WTC11 (cell line): ENCODE measurements at regions of chr10 and their contacts with region 1.

Region 1: DNA sequence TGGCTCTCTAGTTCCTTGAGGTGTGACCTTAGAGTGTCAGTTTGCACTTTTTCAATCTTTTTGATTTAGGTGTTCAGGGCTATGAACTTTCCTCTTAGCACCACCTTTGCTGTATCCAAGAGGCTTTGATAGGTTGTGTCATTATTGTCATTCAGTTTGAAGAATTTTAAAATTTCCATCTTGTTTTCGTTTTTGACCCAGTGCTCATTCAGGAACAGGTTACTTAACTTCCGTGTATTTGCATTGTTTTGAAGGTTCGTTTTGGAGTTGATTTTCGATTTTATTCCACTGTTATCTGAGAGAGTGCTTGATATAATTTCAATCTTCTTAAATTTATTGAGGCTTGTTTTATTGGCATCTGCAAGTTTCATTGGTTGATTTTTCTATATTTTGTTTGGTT is 37.3 kb downstream of the FANK1 start:
- DNase-seq: no peak
- ATAC-seq: no peak
- H3K4me3 Mint-ChIP-seq: no peak overlapping the region
- H3K27ac Mint-ChIP-seq: no peak overlapping the region
- H3K4me1 Mint-ChIP-seq: peaks cover 8% of the 10 kb centered on the region
- H3K27me3 Mint-ChIP-seq: no peaks in the 10 kb centered on the region
- CTCF ChIP-seq: no peak

Region 2: DNA sequence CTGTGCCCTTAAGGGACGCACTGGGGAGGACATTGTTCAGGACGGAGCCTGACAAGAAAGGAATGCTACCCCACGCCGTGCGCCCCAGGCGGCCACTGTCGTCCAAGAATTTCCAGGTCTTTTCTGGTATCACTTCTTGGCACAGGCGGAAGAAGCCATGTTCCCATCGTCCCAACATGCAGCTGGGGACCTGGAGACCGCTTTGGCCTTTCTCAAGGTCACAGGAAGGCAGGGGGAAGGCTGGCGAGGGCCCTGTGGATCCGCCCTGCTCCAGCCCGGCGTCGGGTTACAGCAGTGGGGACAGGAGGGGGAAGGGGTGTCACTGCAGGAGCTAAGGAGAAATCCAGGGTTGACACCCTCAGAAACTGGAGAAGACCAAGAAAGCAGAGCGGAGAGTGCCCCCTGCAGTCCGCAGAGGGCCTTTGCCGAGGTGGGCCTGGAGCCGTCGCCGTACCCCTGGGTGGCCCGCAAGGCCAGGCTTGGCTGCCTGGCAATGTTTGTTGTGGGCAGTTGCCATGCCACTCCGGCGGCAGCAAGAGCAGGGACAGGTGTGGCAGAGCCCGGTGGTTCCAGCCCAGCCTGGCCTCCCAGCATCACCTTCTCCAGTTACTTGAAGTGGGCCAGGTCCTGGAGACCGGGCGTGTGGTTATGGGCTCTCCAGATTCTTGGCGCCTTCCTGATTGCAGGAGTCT is 1368.0 kb before region 1 on chr10:
- CTCF ChIA-PET with region 1: no interaction called
- POLR2A ChIA-PET with region 1: no interaction called
- DNase-seq: peak; percentile 82
- ATAC-seq: peak; percentile 94
- H3K4me3 Mint-ChIP-seq: no peak overlapping the region
- H3K27ac Mint-ChIP-seq: peak overlapping the region; percentile 77
- H3K4me1 Mint-ChIP-seq: peaks cover 15% of the 10 kb centered on the region
- H3K27me3 Mint-ChIP-seq: no peaks in the 10 kb centered on the region
- CTCF ChIP-seq: peak; percentile 63

Region 3: DNA sequence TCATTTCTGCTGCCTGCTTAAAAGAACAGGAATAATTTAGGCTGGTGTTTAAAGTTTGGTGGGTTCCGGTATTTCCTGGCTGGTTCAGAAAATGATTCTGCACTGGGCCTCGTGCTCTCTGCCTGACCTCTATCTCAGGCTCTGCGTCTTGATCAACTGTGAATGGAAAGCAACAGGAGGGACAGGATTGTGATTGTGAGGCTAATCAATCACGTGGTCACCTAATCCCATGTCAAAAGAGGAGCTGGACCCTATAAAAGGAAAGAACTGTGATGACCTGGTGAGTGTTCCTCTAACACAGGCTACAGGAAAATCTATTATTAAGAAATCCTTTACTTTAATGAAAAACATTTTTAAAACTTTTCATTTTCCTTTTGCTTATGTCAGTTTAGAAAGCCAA is 52.5 kb before region 1 on chr10 and contains the start of gene DHX32:
- CTCF ChIA-PET with region 1: interaction called, 13 read pairs
- POLR2A ChIA-PET with region 1: no interaction called
- DNase-seq: peak; percentile 28
- ATAC-seq: peak; percentile 98
- H3K4me3 Mint-ChIP-seq: peak within 1 kb of the TSS; percentile 50
- H3K27ac Mint-ChIP-seq: peak within 1 kb of the TSS; percentile 88
- H3K4me1 Mint-ChIP-seq: peaks cover 27% of the 10 kb centered on the region
- H3K27me3 Mint-ChIP-seq: peaks cover 5% of the 10 kb centered on the region
- CTCF ChIP-seq: no peak
- total RNA-seq, gene DHX32: 22.7 to 28.0 TPM (median 25.6 TPM) in 3 replicates

Region 4: GRCh38 chr10:125961739-125962138 is 28.0 kb after region 1 on chr10:
- CTCF ChIA-PET with region 1: interaction called, 22 read pairs
- POLR2A ChIA-PET with region 1: no interaction called
- DNase-seq: no peak
- ATAC-seq: peak; percentile 63
- H3K4me3 Mint-ChIP-seq: no peak overlapping the region
- H3K27ac Mint-ChIP-seq: no peak overlapping the region
- H3K4me1 Mint-ChIP-seq: peaks cover 7% of the 10 kb centered on the region; the same call in 1 of the 2 replicates
- H3K27me3 Mint-ChIP-seq: no peaks in the 10 kb centered on the region
- CTCF ChIP-seq: no peak

Region 5: DNA sequence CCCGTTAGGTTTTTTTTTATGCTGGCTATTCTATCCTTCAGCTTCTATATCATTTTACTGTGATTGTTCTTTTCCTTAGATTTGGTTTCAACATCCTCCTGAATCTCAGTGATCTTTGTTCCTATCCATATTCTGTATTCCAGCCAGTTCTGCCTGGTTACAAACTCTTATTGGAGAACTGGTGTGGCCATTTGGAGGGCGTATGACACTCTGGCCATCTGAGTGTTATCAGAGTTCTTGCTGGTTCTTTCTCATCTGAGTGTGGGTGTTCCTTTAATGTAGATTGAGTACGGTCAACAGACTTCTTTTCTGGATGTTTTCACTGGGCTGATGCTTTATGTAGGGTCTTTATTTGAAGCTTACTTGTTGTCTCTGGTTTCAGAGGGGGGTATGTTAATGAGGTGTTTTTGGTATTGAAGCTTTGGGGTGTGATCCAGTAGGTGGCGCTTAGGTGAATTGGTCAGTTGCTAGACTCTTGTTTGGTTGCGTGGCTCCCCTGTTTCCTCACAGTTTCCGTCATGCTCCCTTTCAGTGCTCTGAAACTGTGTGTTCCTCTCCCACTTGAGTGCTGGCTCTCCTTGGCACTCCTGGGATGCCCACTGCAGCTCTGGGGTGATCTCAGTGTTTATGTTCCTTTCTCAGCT is 43.4 kb after region 1 on chr10:
- CTCF ChIA-PET with region 1: interaction called, 46 read pairs
- POLR2A ChIA-PET with region 1: no interaction called
- DNase-seq: peak; percentile 35
- ATAC-seq: peak; percentile 80
- H3K4me3 Mint-ChIP-seq: no peak overlapping the region
- H3K27ac Mint-ChIP-seq: no peak overlapping the region
- H3K4me1 Mint-ChIP-seq: peaks cover 16% of the 10 kb centered on the region
- H3K27me3 Mint-ChIP-seq: no peaks in the 10 kb centered on the region
- CTCF ChIP-seq: peak; percentile 10; the same call in 1 of the 2 replicates

Region 6: GRCh38 chr10:125982260-125982948 is 48.7 kb after region 1 on chr10:
- CTCF ChIA-PET with region 1: interaction called, 46 read pairs
- POLR2A ChIA-PET with region 1: no interaction called
- DNase-seq: peak; percentile 33
- ATAC-seq: peak; percentile 76
- H3K4me3 Mint-ChIP-seq: no peak overlapping the region
- H3K27ac Mint-ChIP-seq: no peak overlapping the region
- H3K4me1 Mint-ChIP-seq: peaks cover 20% of the 10 kb centered on the region
- H3K27me3 Mint-ChIP-seq: no peaks in the 10 kb centered on the region
- CTCF ChIP-seq: peak; percentile 48

Region 7: GRCh38 chr10:126504063-126504739 is 570.5 kb after region 1 on chr10:
- CTCF ChIA-PET with region 1: interaction called, 15 read pairs
- POLR2A ChIA-PET with region 1: no interaction called
- DNase-seq: peak; percentile 48
- ATAC-seq: peak; percentile 99
- H3K4me3 Mint-ChIP-seq: no peak overlapping the region
- H3K27ac Mint-ChIP-seq: no peak overlapping the region
- H3K4me1 Mint-ChIP-seq: no peaks in the 10 kb centered on the region
- H3K27me3 Mint-ChIP-seq: no peaks in the 10 kb centered on the region
- CTCF ChIP-seq: peak; percentile 45; the same call in 1 of the 2 replicates

Region 8: DNA sequence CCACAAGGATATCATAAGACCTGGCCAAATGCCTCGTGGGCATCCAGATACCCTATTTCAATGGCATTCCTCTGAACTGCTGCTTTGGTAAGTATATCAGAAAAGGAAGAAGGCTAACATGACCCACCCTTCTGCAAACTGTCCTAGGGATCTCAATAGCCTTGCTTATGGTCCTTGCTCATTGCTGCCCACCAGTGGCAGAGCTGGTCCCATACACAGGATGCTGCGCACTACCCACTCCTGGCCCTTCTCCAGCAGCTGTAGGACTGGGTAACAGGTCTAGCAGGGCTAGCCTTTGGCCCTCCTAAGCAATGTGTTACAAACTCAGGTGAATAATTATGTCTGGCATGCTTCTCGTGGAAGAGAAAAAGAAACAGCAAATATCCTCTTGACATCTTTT is 664.3 kb after region 1 on chr10:
- CTCF ChIA-PET with region 1: interaction called, 16 read pairs
- POLR2A ChIA-PET with region 1: no interaction called
- DNase-seq: peak; percentile 76
- ATAC-seq: peak; percentile 94
- H3K4me3 Mint-ChIP-seq: no peak overlapping the region
- H3K27ac Mint-ChIP-seq: no peak overlapping the region
- H3K4me1 Mint-ChIP-seq: peaks cover 24% of the 10 kb centered on the region
- H3K27me3 Mint-ChIP-seq: no peaks in the 10 kb centered on the region; the same call in 1 of the 2 replicates
- CTCF ChIP-seq: peak; percentile 70